Mammary epithelial cell (primary cell): ENCODE measurements at regions of chr16 and their contacts with region 1.

Region 1: DNA sequence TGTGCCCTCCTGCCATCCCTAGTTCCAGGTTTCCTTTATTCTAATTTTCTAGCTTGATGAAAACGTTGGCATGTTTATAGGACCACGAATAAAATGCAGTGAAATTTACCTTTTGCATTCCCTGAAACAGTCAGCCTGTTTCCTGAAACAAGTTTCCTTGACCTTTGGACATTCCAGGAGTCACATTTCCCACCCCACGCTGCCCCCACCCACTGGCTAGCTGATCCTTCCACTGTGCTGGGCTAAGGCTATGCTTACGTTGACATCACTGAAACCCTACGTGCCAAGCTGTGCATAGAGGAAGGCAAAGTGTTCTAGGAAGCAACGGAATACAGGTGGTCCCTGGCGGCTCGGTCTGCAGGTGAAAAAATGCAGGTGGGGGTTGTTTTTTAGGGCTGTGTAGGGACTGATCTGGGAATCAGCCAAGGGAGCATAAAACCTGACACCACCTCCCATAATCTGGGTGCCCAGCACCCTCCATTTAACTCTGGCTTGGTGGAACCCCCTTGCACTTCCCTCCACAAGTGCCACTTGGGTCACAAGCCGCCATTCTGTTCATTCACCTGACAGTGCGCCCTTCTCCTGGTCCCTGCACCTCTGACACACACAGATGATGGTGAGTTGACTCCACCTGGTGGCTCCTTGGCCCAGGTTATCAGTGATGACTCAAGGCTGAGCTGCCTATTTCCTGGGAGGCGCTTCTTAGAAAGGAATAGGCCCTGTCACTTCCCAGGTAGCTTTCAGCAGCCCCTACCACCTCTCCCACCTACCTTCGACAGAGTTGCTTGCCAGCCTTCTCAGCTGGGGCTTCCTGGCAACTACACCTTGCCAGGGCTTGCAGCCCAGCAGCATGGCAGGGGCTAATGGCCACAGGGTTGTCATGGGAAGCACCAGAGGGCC is 83.7 kb downstream of the N4BP1 start:
- DNase-seq: peak; percentile 75
- H3K4me3 ChIP-seq: no peak overlapping the region
- H3K27ac ChIP-seq: peak overlapping the region; percentile 9
- H3K4me1 ChIP-seq: peaks cover 5% of the 10 kb centered on the region
- H3K27me3 ChIP-seq: no peaks in the 10 kb centered on the region
- CTCF ChIP-seq: peak; percentile 54 to 81

Region 2: GRCh38 chr16:48231727-48232492 is 294.4 kb before region 1 on chr16:
- CTCF ChIA-PET with region 1: no interaction called
- dilution Hi-C with region 1: no loop called
- in situ Hi-C with region 1: no loop called
- intact Hi-C with region 1: loop called (anchors 5 kb)
- DNase-seq: peak; percentile 30
- H3K4me3 ChIP-seq: no peak overlapping the region
- H3K27ac ChIP-seq: no peak overlapping the region
- H3K4me1 ChIP-seq: no peaks in the 10 kb centered on the region
- H3K27me3 ChIP-seq: no peaks in the 10 kb centered on the region
- CTCF ChIP-seq: peak; percentile 43 to 52

Region 3: DNA sequence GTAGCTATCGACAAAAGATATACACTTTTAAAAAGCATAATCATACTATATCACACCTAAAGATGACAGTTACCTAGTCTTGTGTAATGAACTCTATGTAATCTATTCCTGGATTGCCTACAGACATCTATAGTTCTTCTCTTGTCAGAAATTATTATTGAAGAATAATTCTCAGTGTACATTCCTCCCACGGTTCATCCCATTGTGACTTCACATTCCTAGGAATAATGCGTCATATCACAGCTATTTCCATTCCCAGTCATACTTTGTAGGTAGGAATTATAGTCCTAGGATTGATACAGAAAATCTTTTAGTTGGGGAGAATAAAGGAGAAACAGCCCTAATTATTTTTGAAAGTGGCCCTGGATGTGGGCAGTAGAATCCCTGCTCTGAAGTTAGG is 235.0 kb before region 1 on chr16:
- CTCF ChIA-PET with region 1: no interaction called
- dilution Hi-C with region 1: no loop called
- in situ Hi-C with region 1: no loop called
- intact Hi-C with region 1: loop called (anchors 1 kb)
- DNase-seq: peak; percentile 48
- H3K4me3 ChIP-seq: peak overlapping the region in 2 of 3 experiments; percentile 27 to 34
- H3K27ac ChIP-seq: peak overlapping the region; percentile 94
- H3K4me1 ChIP-seq: peaks cover 29% of the 10 kb centered on the region
- H3K27me3 ChIP-seq: no peaks in the 10 kb centered on the region
- CTCF ChIP-seq: no peak

Region 4: GRCh38 chr16:48385272-48386150 is 140.8 kb before region 1 on chr16 and contains the start of gene SIAH1:
- CTCF ChIA-PET with region 1: no interaction called
- dilution Hi-C with region 1: no loop called
- in situ Hi-C with region 1: no loop called
- intact Hi-C with region 1: loop called (anchors 1 kb)
- DNase-seq: peak; percentile 77
- H3K4me3 ChIP-seq: peak within 1 kb of the TSS; percentile 90 to 95 (median 92)
- H3K27ac ChIP-seq: peak within 1 kb of the TSS; percentile 88
- H3K4me1 ChIP-seq: peaks cover 3% of the 10 kb centered on the region
- H3K27me3 ChIP-seq: no peaks in the 10 kb centered on the region
- CTCF ChIP-seq: no peak
- total RNA-seq, gene SIAH1: 22.3 to 46.0 TPM